Motor neuron (in vitro differentiated cells): ENCODE measurements at regions of chr6 and their contacts with region 1.

Region 1: GRCh38 chr6:132483779-132484679 is 28.9 kb downstream of the STX7 start:
- ATAC-seq: peak; percentile 44 to 78 (median 60)
- H3K4me3 ChIP-seq: no peak overlapping the region
- H3K27ac ChIP-seq: no peak overlapping the region
- H3K4me1 ChIP-seq: peaks cover 5 to 7% of the 10 kb centered on the region in 2 donors

Region 2: GRCh38 chr6:131909408-131910218 is 574.4 kb before region 1 on chr6:
- in situ Hi-C with region 1: loop called in 4 of 9 experiments (anchors 25 kb)
- ATAC-seq: peak; percentile 74 to 97 (median 84)
- H3K4me3 ChIP-seq: no peak overlapping the region
- H3K27ac ChIP-seq: no peak overlapping the region
- H3K4me1 ChIP-seq: peaks cover 0 to 6% of the 10 kb centered on the region in 2 donors

Region 3: GRCh38 chr6:132279592-132280139 is 204.4 kb before region 1 on chr6:
- in situ Hi-C with region 1: loop called in 5 of 9 experiments (anchors 10 to 25 kb)
- ATAC-seq: peak; percentile 61 to 84 (median 71)
- H3K4me3 ChIP-seq: peak overlapping the region; percentile 23 to 46 (median 40)
- H3K27ac ChIP-seq: no peak overlapping the region
- H3K4me1 ChIP-seq: no peaks in the 10 kb centered on the region

Region 4: GRCh38 chr6:132300323-132300949 is 183.6 kb before region 1 on chr6:
- in situ Hi-C with region 1: loop called in 8 of 9 experiments (anchors 10 to 25 kb)
- ATAC-seq: peak; percentile 47 to 81 (median 70)
- H3K4me3 ChIP-seq: no peak overlapping the region
- H3K27ac ChIP-seq: no peak overlapping the region
- H3K4me1 ChIP-seq: no peaks in the 10 kb centered on the region